Naive thymus-derived CD4-positive, alpha-beta T cell (primary cell): ENCODE measurements at regions of chr9 and their contacts with region 1.

Region 1: DNA sequence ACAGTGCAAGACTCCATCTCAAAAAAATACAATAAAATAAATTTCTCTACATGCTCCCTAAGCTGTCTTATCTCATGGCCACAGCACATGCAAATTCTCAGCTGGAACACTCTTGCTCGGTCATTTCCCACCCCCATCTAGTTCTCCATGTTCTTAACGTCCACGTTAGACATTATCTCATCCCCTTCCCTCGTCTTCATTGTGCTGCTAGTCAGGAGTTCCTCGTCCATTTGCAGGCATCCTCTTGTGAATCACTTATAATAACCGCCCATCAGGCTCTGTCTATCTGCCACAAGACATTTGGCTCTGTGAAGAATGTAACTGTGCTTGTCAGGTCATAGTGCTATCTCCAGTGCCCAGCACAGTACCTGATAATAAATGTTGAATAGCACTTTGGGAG is 32.9 kb upstream of the GOLGA1 start:
- DNase-seq: no peak
- ATAC-seq: no peak
- H3K4me3 ChIP-seq: no peak overlapping the region
- H3K4me3 Mint-ChIP-seq: no peak overlapping the region
- H3K27ac ChIP-seq: no peak overlapping the region
- H3K27ac Mint-ChIP-seq: peak overlapping the region in 4 of 9 donors; percentile 15 to 58 (median 43)
- H3K4me1 ChIP-seq: no peaks in the 10 kb centered on the region
- H3K4me1 Mint-ChIP-seq: peaks cover 0 to 2% (median 0%) of the 10 kb centered on the region in 7 donors
- H3K27me3 ChIP-seq: no peaks in the 10 kb centered on the region
- H3K27me3 Mint-ChIP-seq: no peaks in the 10 kb centered on the region

Region 2: DNA sequence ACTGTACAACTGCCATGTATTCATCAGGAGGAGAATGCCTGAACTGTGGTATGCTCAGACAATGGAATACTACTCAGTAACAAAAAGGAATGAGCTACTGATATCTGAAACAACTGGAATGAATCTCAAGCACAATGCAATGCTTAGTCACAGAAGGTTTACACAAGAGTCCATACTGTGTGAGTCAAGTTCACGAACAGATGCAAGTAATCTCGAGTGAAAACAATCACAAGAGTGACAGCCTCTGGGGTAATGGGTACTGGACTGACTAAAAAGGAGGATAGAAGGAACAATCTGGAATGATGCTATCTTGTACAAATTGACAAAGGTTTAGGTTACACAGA is 13.4 kb before region 1 on chr9:
- CTCF ChIA-PET with region 1: interaction called, 4 read pairs
- POLR2A ChIA-PET with region 1: interaction called, 13 read pairs
- intact Hi-C with region 1: no loop called
- DNase-seq: no peak
- ATAC-seq: no peak
- H3K4me3 ChIP-seq: no peak overlapping the region
- H3K4me3 Mint-ChIP-seq: no peak overlapping the region
- H3K27ac ChIP-seq: no peak overlapping the region
- H3K27ac Mint-ChIP-seq: no peak overlapping the region
- H3K4me1 ChIP-seq: peaks cover 12 to 21% of the 10 kb centered on the region in 2 donors
- H3K4me1 Mint-ChIP-seq: peaks cover 12 to 19% (median 19%) of the 10 kb centered on the region in 7 donors
- H3K27me3 ChIP-seq: no peaks in the 10 kb centered on the region
- H3K27me3 Mint-ChIP-seq: no peaks in the 10 kb centered on the region